Activated CD4-positive, alpha-beta T cell treated with anti-CD3 and anti-CD28 coated beads, Interleukin-2, amount 10 ng/mL, durations not matched to agents 7 days and 5 days (primary cell): ENCODE measurements at regions of chr3 and their contacts with region 1.

Region 1: GRCh38 chr3:47420511-47421484 is 40.0 kb downstream of the PTPN23 start:
- DNase-seq: peak; percentile 94
- H3K4me3 Mint-ChIP-seq: peak overlapping the region; percentile 60
- H3K27ac Mint-ChIP-seq: peak overlapping the region; percentile 99
- H3K4me1 Mint-ChIP-seq: peaks cover 19% of the 10 kb centered on the region
- H3K27me3 Mint-ChIP-seq: no peaks in the 10 kb centered on the region

Region 2: DNA sequence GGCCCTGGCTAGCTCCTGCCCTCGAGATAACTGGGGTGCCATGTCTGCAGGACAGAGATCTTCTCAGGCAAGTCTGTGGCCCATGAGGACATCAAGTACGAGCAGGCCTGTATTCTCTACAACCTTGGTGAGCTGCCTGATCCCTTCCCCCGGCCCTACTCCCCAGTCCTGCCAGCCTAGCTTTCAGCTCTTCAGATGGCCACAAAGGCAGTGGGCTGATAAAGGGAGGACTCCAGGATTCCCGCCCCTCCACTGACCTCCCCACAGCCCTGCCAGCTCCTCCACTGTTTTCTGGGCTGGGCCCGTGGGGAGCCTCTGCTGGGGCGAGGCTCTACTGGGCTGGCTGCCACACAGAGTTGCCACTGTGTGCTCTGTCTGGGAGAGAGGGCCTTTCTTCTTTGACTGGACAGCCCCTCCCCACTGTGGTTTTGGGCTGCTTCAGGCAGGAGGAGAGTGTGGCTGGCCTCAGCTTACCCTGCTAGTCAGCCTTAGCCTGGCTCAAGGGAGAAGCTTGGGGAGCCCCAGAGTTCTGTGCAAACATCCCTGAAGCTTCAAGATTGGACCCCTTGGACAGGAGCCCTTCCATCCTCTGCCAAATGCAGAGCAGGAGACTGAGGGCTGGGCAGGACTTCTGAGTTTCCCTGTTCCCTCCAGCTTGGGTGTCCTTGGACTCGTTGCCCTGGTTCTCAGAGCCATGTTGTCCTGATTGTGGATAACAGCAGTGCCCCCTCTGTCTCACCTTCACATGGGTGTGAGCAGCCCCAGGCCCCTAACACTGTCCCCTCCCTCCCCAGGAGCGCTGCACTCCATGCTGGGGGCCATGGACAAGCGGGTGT is 15.6 kb before region 1 on chr3:
- CTCF ChIA-PET with region 1: interaction called, 12 read pairs
- POLR2A ChIA-PET with region 1: no interaction called
- DNase-seq: no peak
- H3K4me3 Mint-ChIP-seq: no peak overlapping the region
- H3K27ac Mint-ChIP-seq: no peak overlapping the region
- H3K4me1 Mint-ChIP-seq: peaks cover 8% of the 10 kb centered on the region
- H3K27me3 Mint-ChIP-seq: no peaks in the 10 kb centered on the region

Region 3: GRCh38 chr3:47433796-47434195 is 13.0 kb after region 1 on chr3:
- CTCF ChIA-PET with region 1: interaction called, 33 read pairs
- POLR2A ChIA-PET with region 1: no interaction called
- DNase-seq: no peak
- H3K4me3 Mint-ChIP-seq: no peak overlapping the region
- H3K27ac Mint-ChIP-seq: no peak overlapping the region
- H3K4me1 Mint-ChIP-seq: peaks cover 7% of the 10 kb centered on the region
- H3K27me3 Mint-ChIP-seq: no peaks in the 10 kb centered on the region

Region 4: DNA sequence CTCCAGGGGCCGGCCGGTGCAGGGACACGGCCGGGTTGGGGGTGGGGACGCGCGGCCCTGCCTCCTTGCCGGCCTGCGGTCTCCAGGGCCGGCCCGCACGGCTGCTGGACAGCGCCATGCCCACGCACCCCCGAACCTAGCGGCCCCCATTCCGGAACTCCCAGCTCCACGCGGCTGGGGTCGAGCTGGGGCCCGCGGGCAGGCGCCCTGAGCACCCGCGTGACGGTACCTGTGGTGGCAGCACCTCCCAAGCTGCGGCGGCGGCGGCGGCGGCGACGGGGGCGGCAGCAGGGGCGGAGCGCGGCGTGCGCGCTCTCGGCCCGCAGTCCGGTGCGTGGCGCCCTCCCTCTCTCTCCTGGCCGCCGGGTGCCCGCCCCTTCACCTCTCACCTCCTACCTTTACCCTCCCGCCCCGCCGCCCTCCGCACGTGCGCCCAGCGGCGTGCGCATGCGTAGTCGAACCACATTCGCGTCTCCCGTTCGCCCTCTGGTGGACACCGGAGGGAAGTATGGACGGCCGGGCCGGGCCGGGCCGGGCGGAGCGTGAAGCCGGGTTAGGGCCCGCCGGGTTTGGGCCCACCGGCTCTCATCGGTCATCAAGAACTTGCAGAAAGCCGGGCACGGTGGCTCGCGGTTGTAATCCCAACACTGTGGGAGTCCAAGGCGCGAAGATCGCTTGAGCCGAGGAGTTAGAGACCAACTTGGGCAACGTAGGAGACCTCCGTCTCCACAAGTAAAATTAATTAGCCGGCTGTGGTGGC is 55.0 kb after region 1 on chr3 and contains the start of gene SCAP:
- CTCF ChIA-PET with region 1: interaction called, 51 read pairs
- POLR2A ChIA-PET with region 1: interaction called, 4 read pairs
- DNase-seq: peak; percentile 96
- H3K4me3 Mint-ChIP-seq: peak within 1 kb of the TSS; percentile 86
- H3K27ac Mint-ChIP-seq: peak within 1 kb of the TSS; percentile 88
- H3K4me1 Mint-ChIP-seq: peaks cover 31% of the 10 kb centered on the region
- H3K27me3 Mint-ChIP-seq: no peaks in the 10 kb centered on the region
- total RNA-seq, gene SCAP: 68.1 to 71.4 TPM

Region 5: GRCh38 chr3:47522082-47522987 is 101.5 kb after region 1 on chr3:
- CTCF ChIA-PET with region 1: interaction called, 12 read pairs
- POLR2A ChIA-PET with region 1: no interaction called
- DNase-seq: peak; percentile 84
- H3K4me3 Mint-ChIP-seq: no peak overlapping the region
- H3K27ac Mint-ChIP-seq: peak overlapping the region; percentile 33
- H3K4me1 Mint-ChIP-seq: peaks cover 11% of the 10 kb centered on the region
- H3K27me3 Mint-ChIP-seq: no peaks in the 10 kb centered on the region

Region 6: DNA sequence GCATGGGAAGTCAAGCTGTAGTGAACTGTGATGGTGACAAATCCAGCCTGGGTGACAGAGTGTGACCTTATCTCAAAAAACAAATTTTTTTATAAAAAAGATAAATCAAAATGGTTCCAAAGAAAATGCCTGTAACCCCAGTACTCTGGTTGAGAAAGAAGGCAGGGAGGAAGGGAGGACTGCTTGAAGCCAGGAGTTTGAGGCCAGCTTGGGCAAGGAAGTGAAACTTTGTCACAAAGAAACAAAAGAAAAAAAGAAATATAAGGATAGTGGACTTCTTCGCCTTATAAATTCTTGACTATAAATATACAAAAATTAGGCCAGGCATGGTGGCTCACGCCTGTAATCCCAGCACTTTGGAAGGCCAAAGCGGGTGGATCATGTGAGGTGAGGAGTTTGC is 326.8 kb after region 1 on chr3:
- CTCF ChIA-PET with region 1: no interaction called
- POLR2A ChIA-PET with region 1: no interaction called
- DNase-seq: no peak
- H3K4me3 Mint-ChIP-seq: no peak overlapping the region
- H3K27ac Mint-ChIP-seq: no peak overlapping the region
- H3K4me1 Mint-ChIP-seq: peaks cover 4% of the 10 kb centered on the region
- H3K27me3 Mint-ChIP-seq: no peaks in the 10 kb centered on the region